H1 (cell line): ENCODE measurements at regions of chr3 and their contacts with region 1.

Region 1: DNA sequence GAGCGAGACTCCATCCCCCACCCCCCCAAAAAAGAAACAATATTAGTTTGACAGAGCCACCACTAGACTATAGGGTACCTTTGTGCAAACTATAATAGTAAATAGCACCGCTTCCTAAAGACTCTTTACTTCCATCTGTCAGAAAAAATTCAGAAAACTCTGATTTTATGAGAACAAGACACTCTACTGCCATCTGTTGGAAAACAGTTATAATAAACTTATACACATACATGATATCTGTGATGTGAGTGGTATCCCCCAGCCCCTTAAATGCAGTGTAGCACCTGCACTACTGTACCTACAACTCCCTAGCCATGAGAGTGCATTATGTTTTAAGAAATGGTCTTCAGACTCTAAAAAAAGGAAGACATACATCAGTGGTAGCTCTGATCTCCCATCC is 47.1 kb upstream of the CTDSPL start:
- DNase-seq: no peak
- H3K4me3 ChIP-seq: no peak overlapping the region
- H3K27ac ChIP-seq: no peak overlapping the region
- H3K4me1 ChIP-seq: no peaks in the 10 kb centered on the region
- H3K27me3 ChIP-seq: no peaks in the 10 kb centered on the region
- CTCF ChIP-seq: peak in 1 of 3 experiments; percentile 23; a peak in 2 of 4 replicates
- EP300 ChIP-seq: no peak
- POLR2A ChIP-seq: no peak
- RAD21 ChIP-seq: peak; percentile 38 to 45

Region 2: DNA sequence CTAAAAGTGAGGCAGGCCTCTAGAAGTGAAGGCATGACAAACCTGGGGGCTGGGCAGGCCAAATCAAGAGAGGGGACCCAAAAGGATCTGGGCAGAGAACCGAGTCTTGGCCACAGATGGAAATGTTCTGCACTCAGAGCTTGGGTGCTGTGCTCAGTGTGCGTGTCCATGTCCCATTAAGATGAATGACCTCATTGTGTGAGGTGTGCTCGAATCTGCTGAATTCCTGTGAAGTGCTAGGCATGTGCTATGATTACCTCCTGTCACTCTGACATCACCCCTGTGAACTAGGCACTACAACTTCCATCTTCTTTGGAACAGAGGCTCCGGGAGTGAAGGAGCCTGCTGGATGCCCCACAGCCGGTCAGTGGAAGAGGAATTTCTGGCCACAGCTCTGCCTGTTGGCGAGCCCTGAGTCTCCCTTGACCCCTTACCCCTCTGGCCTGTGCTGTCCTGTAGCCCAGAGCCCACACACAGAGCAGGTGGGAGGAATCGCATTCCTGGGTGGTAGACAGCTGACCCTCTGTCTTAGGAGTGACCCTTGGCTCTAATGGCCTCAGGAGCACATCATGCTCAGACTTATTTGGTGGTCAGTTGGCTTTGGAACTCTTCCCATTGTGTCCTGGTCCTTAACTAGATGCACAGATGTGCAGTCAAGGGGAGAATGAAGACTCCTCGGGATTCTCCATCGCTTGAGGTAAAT is 20.5 kb before region 1 on chr3:
- CTCF ChIA-PET with region 1: interaction called, 28 read pairs
- POLR2A ChIA-PET with region 1: no interaction called
- DNase-seq: no peak
- H3K4me3 ChIP-seq: no peak overlapping the region
- H3K27ac ChIP-seq: no peak overlapping the region
- H3K4me1 ChIP-seq: peaks cover 0 to 5% (median 0%) of the 10 kb centered on the region in 4 experiments; a peak in 1 of 7 replicates
- H3K27me3 ChIP-seq: no peaks in the 10 kb centered on the region
- CTCF ChIP-seq: no peak
- EP300 ChIP-seq: no peak
- POLR2A ChIP-seq: no peak
- RAD21 ChIP-seq: no peak

Region 3: DNA sequence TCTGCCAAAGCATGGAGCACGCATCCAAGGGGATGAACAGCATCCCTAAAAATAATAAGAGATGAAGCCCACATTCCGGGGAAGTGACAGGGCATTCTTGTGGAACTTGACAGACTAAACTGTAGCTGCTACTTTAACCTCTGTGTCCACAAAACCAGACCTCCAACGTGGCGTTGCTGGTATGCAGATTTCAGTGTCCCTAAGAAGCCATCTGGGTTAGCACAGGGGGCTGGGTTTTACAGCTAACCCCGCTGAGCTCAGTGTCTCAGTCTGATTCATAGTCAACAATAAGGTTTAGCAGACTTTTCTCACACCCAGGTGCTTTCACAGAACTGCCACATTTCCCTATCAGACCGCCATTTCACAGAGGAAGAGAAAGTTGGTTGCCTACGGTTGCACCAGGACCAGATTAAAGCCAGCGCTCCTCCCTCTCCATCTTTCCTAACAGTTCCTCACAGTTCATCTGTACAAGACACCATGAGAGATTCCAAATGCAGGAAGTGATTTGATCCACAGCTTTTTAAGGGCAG is 14.5 kb before region 1 on chr3:
- CTCF ChIA-PET with region 1: interaction called, 28 read pairs
- POLR2A ChIA-PET with region 1: no interaction called
- DNase-seq: no peak
- H3K4me3 ChIP-seq: no peak overlapping the region
- H3K27ac ChIP-seq: no peak overlapping the region
- H3K4me1 ChIP-seq: no peaks in the 10 kb centered on the region
- H3K27me3 ChIP-seq: no peaks in the 10 kb centered on the region
- CTCF ChIP-seq: no peak
- EP300 ChIP-seq: no peak
- POLR2A ChIP-seq: no peak
- RAD21 ChIP-seq: no peak

Region 4: DNA sequence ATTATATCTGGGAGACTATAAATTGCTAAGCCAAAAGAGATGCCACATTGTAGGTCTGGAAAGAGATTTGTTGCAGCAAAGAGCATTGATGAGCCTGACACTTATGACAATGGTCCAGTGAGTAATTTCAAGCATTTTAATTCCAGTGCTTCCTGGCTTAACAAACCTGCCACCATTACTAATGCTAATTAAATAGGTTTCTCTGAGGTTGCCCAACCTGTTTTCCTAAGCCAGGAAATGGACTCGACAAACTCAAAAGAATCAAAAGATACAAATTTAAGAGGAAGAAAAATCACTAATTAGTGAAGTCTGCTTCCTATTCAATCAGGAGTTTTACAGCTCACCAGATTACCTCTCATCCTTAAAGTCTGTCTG is 10.4 kb after region 1 on chr3:
- CTCF ChIA-PET with region 1: interaction called, 15 read pairs
- POLR2A ChIA-PET with region 1: interaction called, 3 read pairs
- DNase-seq: no peak
- H3K4me3 ChIP-seq: no peak overlapping the region
- H3K27ac ChIP-seq: no peak overlapping the region
- H3K4me1 ChIP-seq: no peaks in the 10 kb centered on the region; a peak in 1 of 7 replicates
- H3K27me3 ChIP-seq: no peaks in the 10 kb centered on the region
- CTCF ChIP-seq: no peak
- EP300 ChIP-seq: no peak
- POLR2A ChIP-seq: no peak
- RAD21 ChIP-seq: no peak

Region 5: GRCh38 chr3:37974121-37975083 is 159.9 kb after region 1 on chr3:
- CTCF ChIA-PET with region 1: interaction called, 14 read pairs
- POLR2A ChIA-PET with region 1: no interaction called
- DNase-seq: peak in 1 of 2 experiments; percentile 83
- H3K4me3 ChIP-seq: no peak overlapping the region
- H3K27ac ChIP-seq: no peak overlapping the region
- H3K4me1 ChIP-seq: peaks cover 0 to 3% (median 0%) of the 10 kb centered on the region in 4 experiments; a peak in 1 of 7 replicates
- H3K27me3 ChIP-seq: no peaks in the 10 kb centered on the region
- CTCF ChIP-seq: peak; percentile 85 to 96 (median 94)
- EP300 ChIP-seq: no peak
- POLR2A ChIP-seq: no peak
- RAD21 ChIP-seq: peak; percentile 84 to 87